ENCODE measurements at regions of chr20 and their contacts with region 1.

Region 1: DNA sequence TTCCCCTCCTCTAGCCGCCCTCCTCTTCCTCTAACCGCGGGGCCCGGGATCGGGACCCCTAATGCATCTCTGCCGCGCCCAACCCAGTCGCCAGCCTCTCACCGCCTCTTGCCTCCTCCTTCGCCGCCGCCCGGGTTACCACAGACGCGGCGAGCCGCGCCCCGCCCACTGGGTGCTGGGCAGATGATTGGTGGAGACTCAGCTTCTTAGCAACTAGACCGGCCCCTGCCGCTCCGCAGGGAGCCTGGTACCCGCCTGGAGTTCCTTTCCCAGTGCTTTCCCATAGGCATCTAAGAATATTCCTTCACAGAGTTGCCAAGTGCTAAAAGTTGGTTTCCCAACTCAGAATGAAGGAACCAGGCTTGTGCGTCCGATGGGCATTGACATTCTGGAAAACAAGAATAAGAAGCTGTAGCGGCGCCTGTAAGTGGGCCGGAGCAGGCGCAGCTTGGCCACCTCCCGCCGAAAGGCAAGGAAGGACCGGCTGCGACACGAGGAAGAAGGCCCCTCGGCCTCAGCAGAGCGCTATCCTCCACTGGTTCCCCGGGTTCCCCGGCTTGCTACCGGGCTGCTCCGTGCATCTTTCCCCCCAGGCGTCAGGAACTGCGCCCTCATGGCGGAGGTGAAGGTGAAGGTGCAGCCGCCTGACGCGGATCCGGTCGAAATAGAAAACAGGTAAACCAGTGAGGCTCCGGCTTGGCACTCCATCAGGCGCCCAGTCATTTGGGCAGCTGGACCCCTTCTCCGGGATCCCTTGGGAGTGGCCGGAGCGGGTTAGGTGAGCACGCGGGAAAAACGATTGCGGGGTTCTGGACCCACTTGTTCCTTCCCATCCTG is at the starts of genes DZANK1 and POLR3F:
- DNase-seq: peak; percentile 94
- H3K4me3 Mint-ChIP-seq: peak within 1 kb of the TSS; percentile 92
- H3K27ac Mint-ChIP-seq: peak within 1 kb of the TSS; percentile 84
- H3K4me1 Mint-ChIP-seq: peaks cover 32% of the 10 kb centered on the region
- H3K27me3 Mint-ChIP-seq: no peaks in the 10 kb centered on the region
- total RNA-seq, gene DZANK1: 0.79 to 0.94 TPM
- total RNA-seq, gene POLR3F: 7.0 to 8.3 TPM

Region 2: DNA sequence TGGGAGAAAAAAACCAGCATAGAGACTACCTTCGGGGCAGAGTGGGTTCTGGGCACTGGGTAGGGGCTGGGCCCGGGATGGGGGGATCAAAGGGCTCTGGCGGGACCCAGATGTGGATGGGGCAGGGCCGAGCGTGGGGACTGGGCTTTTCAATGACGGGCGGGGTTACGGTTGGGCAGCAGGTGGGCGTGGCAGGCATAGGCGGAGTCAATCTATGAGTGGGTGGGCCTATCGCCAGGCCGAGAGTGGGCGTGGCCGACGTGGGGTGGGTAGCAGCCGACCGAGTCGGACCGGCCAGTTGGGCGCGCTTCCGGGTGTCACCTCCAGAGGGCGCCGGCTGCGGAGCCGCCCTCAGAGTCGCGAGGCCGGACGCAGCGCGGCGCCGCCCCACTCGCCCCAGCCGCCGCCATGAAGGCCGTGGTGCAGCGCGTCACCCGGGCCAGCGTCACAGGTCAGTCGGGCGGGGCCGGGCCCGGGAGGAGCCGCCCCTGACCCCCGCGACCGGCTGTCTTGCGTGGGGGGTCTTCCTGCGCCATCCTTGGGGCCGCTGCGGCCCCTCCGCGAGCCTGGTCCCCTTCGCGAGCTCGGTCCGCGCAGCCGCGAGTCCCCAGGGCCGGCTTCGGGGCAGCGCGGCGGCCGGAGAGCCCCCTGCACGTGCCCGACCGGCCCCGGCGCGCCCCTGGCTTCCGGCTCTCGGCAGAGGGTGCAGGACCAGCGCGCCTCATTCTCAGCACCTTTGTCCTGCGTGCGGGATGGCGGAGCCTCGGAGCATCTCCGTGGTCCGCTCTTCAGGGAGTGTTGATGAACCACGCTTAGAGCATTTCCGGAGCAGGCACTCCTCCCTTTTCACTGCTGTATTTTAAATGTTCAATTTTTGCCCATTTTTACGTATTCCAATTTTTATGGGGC is 120.8 kb after region 1 on chr20 and contains the start of gene DTD1:
- CTCF ChIA-PET with region 1: no interaction called
- intact Hi-C with region 1: loop called (anchors 1 kb)
- DNase-seq: peak; percentile 89
- H3K4me3 Mint-ChIP-seq: peak within 1 kb of the TSS; percentile 87
- H3K27ac Mint-ChIP-seq: peak within 1 kb of the TSS; percentile 59
- H3K4me1 Mint-ChIP-seq: peaks cover 23% of the 10 kb centered on the region
- H3K27me3 Mint-ChIP-seq: no peaks in the 10 kb centered on the region
- total RNA-seq, gene DTD1: 46.4 to 47.1 TPM

Region 3: DNA sequence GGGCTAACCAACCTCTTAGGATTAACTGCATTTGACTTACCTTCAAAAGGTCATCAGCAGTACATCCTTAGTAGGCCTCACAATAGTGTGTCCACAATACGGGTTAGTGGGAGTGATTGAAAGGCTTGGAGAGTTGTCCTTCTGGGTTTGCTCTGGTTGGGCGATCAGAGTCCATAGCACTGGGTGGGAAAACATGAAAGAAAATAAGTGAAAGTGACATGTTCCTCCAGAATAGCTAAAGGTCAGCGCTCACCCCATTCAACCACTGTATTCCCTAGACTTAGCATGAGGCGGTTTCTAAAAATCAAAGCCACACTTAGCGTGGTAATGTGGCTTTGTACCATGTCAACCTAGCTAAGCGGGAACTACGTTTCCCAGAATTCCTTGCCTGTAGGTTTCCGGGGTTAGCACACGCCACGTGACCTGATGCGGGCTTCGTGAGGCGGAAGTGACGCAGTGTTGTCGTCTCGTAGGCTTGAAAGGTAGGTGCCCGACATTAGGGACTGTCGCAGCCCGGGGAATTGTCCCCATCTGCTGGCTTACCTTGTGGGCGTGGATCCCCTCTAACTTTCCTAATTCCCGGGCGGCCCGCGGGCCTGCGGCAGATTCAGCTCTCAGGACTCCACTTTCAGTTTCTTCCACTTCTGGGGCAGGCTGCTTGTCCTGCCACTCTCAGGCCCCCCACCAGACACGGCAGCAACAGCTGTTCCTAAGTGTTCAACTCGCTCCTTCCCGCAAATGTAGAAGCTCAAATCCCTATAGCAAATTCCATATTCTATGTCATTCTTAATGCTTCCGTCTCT is 326.7 kb after region 1 on chr20:
- CTCF ChIA-PET with region 1: no interaction called
- intact Hi-C with region 1: loop called (anchors 1 kb)
- DNase-seq: peak; percentile 93
- H3K4me3 Mint-ChIP-seq: peak overlapping the region; percentile 91
- H3K27ac Mint-ChIP-seq: peak overlapping the region; percentile 94
- H3K4me1 Mint-ChIP-seq: peaks cover 12% of the 10 kb centered on the region
- H3K27me3 Mint-ChIP-seq: peaks cover 8% of the 10 kb centered on the region

Measured in activated naive CD4-positive, alpha-beta T cell treated with anti-CD3 and anti-CD28 coated beads for 36 hours (primary cell).